ENCODE measurements at regions of chr10 and their contacts with region 1.

Region 1: GRCh38 chr10:27558612-27559020 is 54.5 kb downstream of the RAB18 start:
- DNase-seq: peak; percentile 66 to 74
- H3K4me3 ChIP-seq: no peak overlapping the region
- H3K4me3 Mint-ChIP-seq: no peak overlapping the region
- H3K27ac Mint-ChIP-seq: no peak overlapping the region
- H3K4me1 ChIP-seq: no peaks in the 10 kb centered on the region
- H3K4me1 Mint-ChIP-seq: no peaks in the 10 kb centered on the region
- H3K27me3 ChIP-seq: no peaks in the 10 kb centered on the region
- H3K27me3 Mint-ChIP-seq: peaks cover 2% of the 10 kb centered on the region
- CTCF ChIP-seq: peak; percentile 88 to 93

Region 2: DNA sequence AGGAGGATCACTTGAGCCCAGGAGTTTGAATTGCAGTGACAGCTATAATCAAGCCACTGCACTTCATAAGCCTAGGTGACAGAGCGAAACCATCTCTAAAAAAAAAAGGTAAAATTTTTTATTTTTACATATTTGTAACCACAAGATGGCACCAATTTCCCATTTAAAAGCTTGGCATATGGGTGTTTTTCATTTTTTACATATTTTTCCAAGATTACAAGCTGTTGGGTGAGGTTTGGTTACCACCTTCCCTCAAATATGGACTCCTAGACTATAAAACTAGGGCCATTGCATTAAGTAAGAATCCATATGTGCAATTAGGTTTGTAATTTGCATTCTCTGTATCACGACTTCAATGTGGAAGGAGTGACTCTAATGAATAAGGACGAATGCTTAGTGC is 188.7 kb before region 1 on chr10:
- CTCF ChIA-PET with region 1: no interaction called
- POLR2A ChIA-PET with region 1: no interaction called
- intact Hi-C with region 1: loop called (anchors 5 kb)
- DNase-seq: no peak
- H3K4me3 ChIP-seq: no peak overlapping the region
- H3K4me3 Mint-ChIP-seq: no peak overlapping the region
- H3K27ac Mint-ChIP-seq: no peak overlapping the region
- H3K4me1 ChIP-seq: no peaks in the 10 kb centered on the region
- H3K4me1 Mint-ChIP-seq: no peaks in the 10 kb centered on the region
- H3K27me3 ChIP-seq: no peaks in the 10 kb centered on the region
- H3K27me3 Mint-ChIP-seq: peaks cover 13% of the 10 kb centered on the region
- CTCF ChIP-seq: peak; percentile 26 to 43

Region 3: GRCh38 chr10:27454837-27455236 is 103.8 kb before region 1 on chr10:
- CTCF ChIA-PET with region 1: no interaction called
- POLR2A ChIA-PET with region 1: no interaction called
- intact Hi-C with region 1: loop called (anchors 2 kb)
- DNase-seq: peak in 1 of 2 experiments; percentile 37
- H3K4me3 ChIP-seq: no peak overlapping the region
- H3K4me3 Mint-ChIP-seq: peak overlapping the region; percentile 57
- H3K27ac Mint-ChIP-seq: peak overlapping the region; percentile 64
- H3K4me1 ChIP-seq: peaks cover 35% of the 10 kb centered on the region
- H3K4me1 Mint-ChIP-seq: peaks cover 47% of the 10 kb centered on the region
- H3K27me3 ChIP-seq: no peaks in the 10 kb centered on the region
- H3K27me3 Mint-ChIP-seq: no peaks in the 10 kb centered on the region
- CTCF ChIP-seq: no peak

Region 4: GRCh38 chr10:27724287-27724686 is 165.7 kb after region 1 on chr10:
- CTCF ChIA-PET with region 1: no interaction called
- POLR2A ChIA-PET with region 1: no interaction called
- intact Hi-C with region 1: loop called (anchors 2 kb)
- DNase-seq: no peak
- H3K4me3 ChIP-seq: no peak overlapping the region
- H3K4me3 Mint-ChIP-seq: no peak overlapping the region
- H3K27ac Mint-ChIP-seq: no peak overlapping the region
- H3K4me1 ChIP-seq: no peaks in the 10 kb centered on the region
- H3K4me1 Mint-ChIP-seq: no peaks in the 10 kb centered on the region
- H3K27me3 ChIP-seq: no peaks in the 10 kb centered on the region
- H3K27me3 Mint-ChIP-seq: peaks cover 28% of the 10 kb centered on the region
- CTCF ChIP-seq: peak; percentile 20 to 27

Region 5: DNA sequence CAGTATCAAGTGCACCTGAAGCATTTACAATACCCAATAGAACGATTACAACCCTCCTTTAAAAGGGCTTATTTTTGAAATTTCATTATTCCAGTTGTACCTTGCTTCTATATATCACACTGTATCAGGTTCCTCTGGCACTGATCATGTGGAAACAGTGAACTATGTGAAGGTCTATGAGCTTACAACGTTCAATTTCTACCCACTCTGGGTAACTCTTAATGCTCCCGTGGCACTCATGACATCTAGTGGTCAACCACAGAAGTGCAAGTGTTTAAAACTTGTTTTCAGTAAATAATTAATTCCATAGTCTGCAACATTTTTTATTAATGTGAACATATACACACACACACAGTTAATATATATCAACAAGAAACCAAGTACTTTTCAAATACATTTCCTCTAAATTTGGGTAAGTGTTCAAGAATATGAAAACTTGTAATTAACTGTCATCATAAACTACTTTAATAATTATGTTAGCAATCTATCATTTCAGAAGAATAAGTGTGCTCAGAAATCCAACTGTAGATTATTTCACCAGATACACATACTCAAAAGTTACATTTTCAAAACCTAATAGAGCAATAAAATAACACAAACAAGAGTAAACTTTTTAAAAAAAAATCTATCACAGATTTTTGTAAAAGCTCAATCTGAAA is 683.3 kb after region 1 on chr10:
- CTCF ChIA-PET with region 1: interaction called, 3 read pairs
- POLR2A ChIA-PET with region 1: no interaction called
- intact Hi-C with region 1: loop called (anchors 5 kb)
- DNase-seq: peak in 1 of 2 experiments; percentile 67
- H3K4me3 ChIP-seq: no peak overlapping the region
- H3K4me3 Mint-ChIP-seq: no peak overlapping the region
- H3K27ac Mint-ChIP-seq: no peak overlapping the region
- H3K4me1 ChIP-seq: peaks cover 13% of the 10 kb centered on the region
- H3K4me1 Mint-ChIP-seq: no peaks in the 10 kb centered on the region
- H3K27me3 ChIP-seq: no peaks in the 10 kb centered on the region
- H3K27me3 Mint-ChIP-seq: no peaks in the 10 kb centered on the region
- CTCF ChIP-seq: peak; percentile 91 to 92

Measured in Caco-2 (cell line).